ENCODE measurements at regions of chr17 and their contacts with region 1.

Region 1: DNA sequence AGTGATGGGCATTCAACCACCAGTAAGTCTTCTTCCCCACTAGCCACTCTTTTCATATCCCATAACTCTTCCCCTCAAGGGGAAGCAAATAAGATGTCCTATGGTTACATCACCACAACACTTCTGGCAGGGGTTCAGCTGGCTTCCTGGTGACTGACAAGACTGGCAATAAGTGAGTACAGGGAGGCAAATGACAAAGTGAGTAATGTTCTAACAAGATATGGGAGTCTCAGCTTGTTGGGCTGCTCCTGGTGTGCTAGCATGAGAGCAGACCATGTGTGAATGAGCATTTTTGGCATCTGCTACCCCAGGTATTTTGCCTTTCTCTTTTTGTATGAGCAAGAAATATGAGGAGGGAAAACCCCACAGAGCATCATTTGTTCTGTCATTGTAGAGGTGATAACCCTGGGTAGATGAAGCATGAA is 9.9 kb downstream of the TMIGD1 start:
- DNase-seq: peak; percentile 40
- H3K4me3 ChIP-seq: no peak overlapping the region
- H3K27ac ChIP-seq: no peak overlapping the region
- H3K4me1 ChIP-seq: no peaks in the 10 kb centered on the region
- H3K27me3 ChIP-seq: peaks cover 0 to 2% of the 10 kb centered on the region in 2 experiments
- CTCF ChIP-seq: no peak
- POLR2A ChIP-seq: no peak

Region 2: GRCh38 chr17:30336369-30337171 is 12.7 kb after region 1 on chr17:
- CTCF ChIA-PET with region 1: interaction called, 23 read pairs
- POLR2A ChIA-PET with region 1: interaction called, 3 read pairs
- dilution Hi-C with region 1: no loop called
- intact Hi-C with region 1: no loop called
- DNase-seq: peak; percentile 64
- H3K4me3 ChIP-seq: no peak overlapping the region
- H3K27ac ChIP-seq: no peak overlapping the region
- H3K4me1 ChIP-seq: peaks cover 18% of the 10 kb centered on the region
- H3K27me3 ChIP-seq: no peaks in the 10 kb centered on the region
- CTCF ChIP-seq: peak; percentile 42 to 56
- POLR2A ChIP-seq: no peak

Measured in endothelial cell of umbilical vein (primary cell).